Calu3 (cell line): ENCODE measurements at regions of chr16 and their contacts with region 1.

Region 1: GRCh38 chr16:16774389-16774788 is 395.4 kb downstream of the NPIPA7 start:
- DNase-seq: no peak
- H3K4me3 Mint-ChIP-seq: no peak overlapping the region
- H3K27ac Mint-ChIP-seq: no peak overlapping the region
- H3K4me1 Mint-ChIP-seq: no peaks in the 10 kb centered on the region
- H3K27me3 Mint-ChIP-seq: no peaks in the 10 kb centered on the region
- CTCF ChIP-seq: no peak

Region 2: GRCh38 chr16:16763449-16763848 is 10.9 kb before region 1 on chr16:
- CTCF ChIA-PET with region 1: no interaction called
- intact Hi-C with region 1: no loop called
- DNase-seq: no peak
- H3K4me3 Mint-ChIP-seq: no peak overlapping the region
- H3K27ac Mint-ChIP-seq: no peak overlapping the region
- H3K4me1 Mint-ChIP-seq: no peaks in the 10 kb centered on the region
- H3K27me3 Mint-ChIP-seq: no peaks in the 10 kb centered on the region
- CTCF ChIP-seq: no peak

Region 3: GRCh38 chr16:16797239-16797638 is 22.9 kb after region 1 on chr16:
- CTCF ChIA-PET with region 1: no interaction called
- intact Hi-C with region 1: loop called (anchors 2 kb)
- DNase-seq: no peak
- H3K4me3 Mint-ChIP-seq: no peak overlapping the region
- H3K27ac Mint-ChIP-seq: no peak overlapping the region
- H3K4me1 Mint-ChIP-seq: no peaks in the 10 kb centered on the region
- H3K27me3 Mint-ChIP-seq: no peaks in the 10 kb centered on the region
- CTCF ChIP-seq: no peak